Tibial artery (tissue), 4 donors: ENCODE measurements at regions of chr14 and their contacts with region 1.

Region 1: DNA sequence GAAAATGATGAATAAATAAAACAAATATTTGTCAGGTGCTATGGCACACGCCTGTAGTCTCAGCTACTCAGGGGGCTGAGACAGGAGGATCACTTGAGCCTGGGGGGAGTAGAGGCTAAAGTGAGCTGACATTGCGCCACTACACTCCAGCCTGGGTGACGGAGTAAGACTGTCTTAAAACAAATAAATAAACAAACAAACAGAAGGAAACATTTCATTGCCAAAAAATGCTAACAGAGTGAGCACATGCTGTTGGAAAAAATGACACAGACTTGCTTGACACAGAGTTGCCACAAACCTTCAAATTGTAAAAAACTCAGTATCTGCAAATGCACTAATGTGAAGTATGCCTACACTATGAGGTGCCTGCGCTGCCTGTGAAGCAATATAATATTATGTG is 50.8 kb upstream of the AP4S1 start:
- DNase-seq: no peak
- H3K4me3 ChIP-seq: no peak overlapping the region
- H3K27ac ChIP-seq: no peak overlapping the region
- H3K4me1 ChIP-seq: peaks cover 0 to 59% (median 9%) of the 10 kb centered on the region in 4 donors
- H3K27me3 ChIP-seq: no peaks in the 10 kb centered on the region
- CTCF ChIP-seq: no peak

Region 2: DNA sequence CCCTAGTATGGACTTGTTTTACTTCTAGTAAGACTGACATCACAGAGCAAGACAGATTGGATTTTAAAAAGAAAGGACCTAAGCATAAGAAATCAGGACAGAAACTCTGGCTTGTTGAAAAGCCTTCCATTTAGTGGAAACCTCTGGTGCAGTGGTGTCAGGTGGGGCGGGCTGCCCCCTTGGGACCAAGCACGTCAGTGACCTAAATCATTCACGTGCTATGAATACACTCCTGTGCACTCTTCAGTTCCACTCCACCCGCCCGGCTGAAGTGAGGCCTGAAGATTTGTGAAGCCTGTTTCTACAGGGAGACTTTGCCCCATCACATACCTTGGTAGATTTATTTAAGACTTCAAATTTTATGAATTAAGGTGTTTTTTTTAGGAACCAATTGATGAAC is 109.8 kb after region 1 on chr14:
- intact Hi-C with region 1: loop called (anchors 5 kb)
- DNase-seq: no peak
- H3K4me3 ChIP-seq: no peak overlapping the region
- H3K27ac ChIP-seq: no peak overlapping the region
- H3K4me1 ChIP-seq: peaks cover 0 to 13% (median under 1%) of the 10 kb centered on the region in 4 donors
- H3K27me3 ChIP-seq: no peaks in the 10 kb centered on the region
- CTCF ChIP-seq: no peak

Region 3: DNA sequence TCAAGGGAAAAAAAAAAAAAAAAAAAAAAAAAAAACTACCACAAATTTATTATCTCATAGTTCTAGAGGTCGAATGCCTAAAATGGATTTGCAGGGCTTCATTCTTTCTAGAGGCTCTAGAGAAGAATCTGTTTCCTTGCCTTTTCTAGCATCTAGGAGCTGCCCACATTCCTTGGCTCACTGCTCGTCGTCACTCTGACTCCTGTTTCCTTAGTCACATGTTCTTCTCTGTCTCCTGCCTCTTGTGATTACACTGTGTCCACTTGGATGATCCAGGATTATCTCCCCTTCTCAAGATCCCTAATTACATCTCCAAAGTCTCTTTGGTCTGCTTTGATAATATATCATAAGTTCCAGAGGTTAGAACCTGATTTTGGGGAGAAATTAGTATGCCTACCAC is 144.3 kb after region 1 on chr14:
- intact Hi-C with region 1: no loop called
- DNase-seq: no peak
- H3K4me3 ChIP-seq: no peak overlapping the region
- H3K27ac ChIP-seq: no peak overlapping the region
- H3K4me1 ChIP-seq: no peaks in the 10 kb centered on the region
- H3K27me3 ChIP-seq: no peaks in the 10 kb centered on the region
- CTCF ChIP-seq: no peak